ENCODE measurements at regions of chr12 and their contacts with region 1.

Region 1: GRCh38 chr12:65556681-65557437 is 267.4 kb upstream of the HMGA2 start:
- DNase-seq: peak; percentile 16 to 68 (median 53)
- ATAC-seq: peak; percentile 71
- H3K4me3 ChIP-seq: no peak overlapping the region
- H3K4me3 Mint-ChIP-seq: no peak overlapping the region
- H3K27ac ChIP-seq: no peak overlapping the region
- H3K27ac Mint-ChIP-seq: no peak overlapping the region
- H3K4me1 ChIP-seq: no peaks in the 10 kb centered on the region
- H3K4me1 Mint-ChIP-seq: peaks cover 7% of the 10 kb centered on the region
- H3K27me3 ChIP-seq: no peaks in the 10 kb centered on the region
- H3K27me3 Mint-ChIP-seq: peaks cover 14% of the 10 kb centered on the region
- CTCF ChIP-seq: peak; percentile 70

Region 2: GRCh38 chr12:65941388-65941787 is 384.5 kb after region 1 on chr12:
- CTCF ChIA-PET with region 1: no interaction called
- POLR2A ChIA-PET with region 1: no interaction called
- intact Hi-C with region 1: no loop called
- DNase-seq: no peak
- ATAC-seq: no peak
- H3K4me3 ChIP-seq: no peak overlapping the region
- H3K4me3 Mint-ChIP-seq: no peak overlapping the region
- H3K27ac ChIP-seq: no peak overlapping the region
- H3K27ac Mint-ChIP-seq: no peak overlapping the region
- H3K4me1 ChIP-seq: no peaks in the 10 kb centered on the region
- H3K4me1 Mint-ChIP-seq: no peaks in the 10 kb centered on the region
- H3K27me3 ChIP-seq: peaks cover 0 to 3% of the 10 kb centered on the region in 2 experiments
- H3K27me3 Mint-ChIP-seq: peaks cover 3% of the 10 kb centered on the region
- CTCF ChIP-seq: no peak

Region 3: GRCh38 chr12:65986047-65986446 is 429.2 kb after region 1 on chr12:
- CTCF ChIA-PET with region 1: interaction called, 3 read pairs
- POLR2A ChIA-PET with region 1: no interaction called
- intact Hi-C with region 1: loop called in 1 of 2 experiments (anchors 5 kb)
- DNase-seq: no peak
- ATAC-seq: no peak
- H3K4me3 ChIP-seq: no peak overlapping the region
- H3K4me3 Mint-ChIP-seq: no peak overlapping the region
- H3K27ac ChIP-seq: no peak overlapping the region
- H3K27ac Mint-ChIP-seq: no peak overlapping the region
- H3K4me1 ChIP-seq: no peaks in the 10 kb centered on the region
- H3K4me1 Mint-ChIP-seq: no peaks in the 10 kb centered on the region
- H3K27me3 ChIP-seq: peaks cover 0 to 2% of the 10 kb centered on the region in 2 experiments
- H3K27me3 Mint-ChIP-seq: peaks cover 2% of the 10 kb centered on the region
- CTCF ChIP-seq: no peak

Region 4: DNA sequence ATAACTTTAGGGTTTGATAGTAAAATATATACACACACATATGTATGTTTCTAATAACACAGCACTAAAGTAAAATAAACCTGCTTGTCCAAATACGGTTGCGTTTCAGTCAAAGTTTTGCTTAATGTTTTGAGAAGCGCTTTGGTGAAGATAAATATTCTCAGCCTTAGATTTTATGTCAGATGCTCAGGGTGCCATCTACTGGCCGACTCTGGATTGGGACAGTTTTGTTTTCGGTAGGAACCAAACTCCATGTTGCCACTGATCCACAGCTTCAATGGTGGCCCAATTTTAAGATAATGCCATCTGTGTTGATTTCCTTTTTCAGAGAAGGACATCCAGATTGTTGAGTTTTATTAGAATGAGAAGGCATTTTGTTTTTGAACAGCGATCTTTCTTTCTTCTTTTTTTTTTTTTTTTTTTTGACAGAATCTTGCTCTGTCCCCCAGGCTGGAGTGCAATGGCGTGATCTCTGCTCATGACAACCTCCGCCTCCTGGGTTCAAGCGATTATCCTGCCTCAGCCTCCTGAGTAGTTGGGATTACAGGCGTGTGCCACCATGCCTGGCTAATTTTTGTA is 530.6 kb after region 1 on chr12:
- CTCF ChIA-PET with region 1: interaction called, 8 read pairs
- POLR2A ChIA-PET with region 1: no interaction called
- intact Hi-C with region 1: loop called (anchors 1 kb)
- DNase-seq: peak; percentile 14 to 63 (median 46)
- ATAC-seq: no peak
- H3K4me3 ChIP-seq: no peak overlapping the region
- H3K4me3 Mint-ChIP-seq: no peak overlapping the region
- H3K27ac ChIP-seq: no peak overlapping the region
- H3K27ac Mint-ChIP-seq: no peak overlapping the region
- H3K4me1 ChIP-seq: no peaks in the 10 kb centered on the region
- H3K4me1 Mint-ChIP-seq: no peaks in the 10 kb centered on the region
- H3K27me3 ChIP-seq: no peaks in the 10 kb centered on the region
- H3K27me3 Mint-ChIP-seq: peaks cover 29% of the 10 kb centered on the region
- CTCF ChIP-seq: peak; percentile 53

Region 5: GRCh38 chr12:66107451-66107915 is 550.6 kb after region 1 on chr12:
- CTCF ChIA-PET with region 1: no interaction called
- POLR2A ChIA-PET with region 1: no interaction called
- intact Hi-C with region 1: loop called in 1 of 2 experiments (anchors 1 kb)
- DNase-seq: peak in 8 of 9 experiments; percentile 3 to 81 (median 38)
- ATAC-seq: peak; percentile 81
- H3K4me3 ChIP-seq: no peak overlapping the region
- H3K4me3 Mint-ChIP-seq: no peak overlapping the region
- H3K27ac ChIP-seq: no peak overlapping the region
- H3K27ac Mint-ChIP-seq: no peak overlapping the region
- H3K4me1 ChIP-seq: no peaks in the 10 kb centered on the region
- H3K4me1 Mint-ChIP-seq: peaks cover 3% of the 10 kb centered on the region
- H3K27me3 ChIP-seq: no peaks in the 10 kb centered on the region
- H3K27me3 Mint-ChIP-seq: peaks cover 6% of the 10 kb centered on the region
- CTCF ChIP-seq: peak; percentile 74

Measured in CD8-positive, alpha-beta T cell (primary cell).